ENCODE measurements at regions of chr3 and their contacts with region 1.

Region 1: DNA sequence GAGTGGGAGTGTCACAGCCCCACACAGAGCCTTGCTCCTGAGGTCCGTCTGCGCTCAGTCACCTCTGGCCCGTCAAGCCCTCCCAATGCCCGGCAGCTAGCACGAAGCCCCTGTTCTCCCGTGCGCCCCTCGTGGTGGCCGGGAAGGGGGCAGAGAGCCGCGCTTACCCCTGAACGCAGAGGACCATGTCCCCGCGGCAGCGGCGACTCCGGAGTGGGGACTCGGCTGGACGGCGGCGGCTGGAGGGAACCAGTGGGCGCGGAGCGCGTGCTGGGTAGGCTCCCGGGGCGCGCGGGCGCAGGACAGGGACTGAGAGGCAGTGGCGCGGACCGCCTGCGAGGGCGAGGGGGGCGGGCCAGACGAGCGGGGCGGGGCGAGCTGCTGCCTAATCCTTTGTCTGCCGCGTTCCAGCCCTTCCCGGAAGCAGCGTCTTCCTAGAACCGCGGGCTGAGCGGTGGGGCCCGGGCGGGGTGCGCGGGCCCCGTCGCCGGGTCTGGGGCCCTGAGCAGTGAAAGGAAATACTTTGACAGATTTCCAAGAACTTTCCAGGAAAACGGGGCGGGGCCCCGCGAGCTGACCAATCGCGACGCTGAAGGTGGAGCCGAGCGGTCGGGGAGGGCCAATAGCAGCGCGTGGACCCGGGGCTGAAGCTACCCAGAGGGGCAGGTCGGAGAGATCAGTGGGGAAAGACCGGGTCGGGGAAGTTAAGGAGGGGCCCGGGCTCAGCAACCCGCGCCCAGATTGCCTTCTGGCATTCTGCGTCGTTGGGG is at the start of gene CISH:
- DNase-seq: peak; percentile 78 to 83
- ATAC-seq: peak; percentile 65 to 87
- H3K4me3 ChIP-seq: peak within 1 kb of the TSS; percentile 50
- H3K27ac ChIP-seq: peak within 1 kb of the TSS; percentile 72 to 89
- H3K4me1 ChIP-seq: peaks cover 9% of the 10 kb centered on the region
- CTCF ChIP-seq: peak; percentile 15; the same call in 1 of the 3 replicates
- EP300 ChIP-seq: no peak
- POLR2A ChIP-seq: peak; percentile 43; the same call in 1 of the 2 replicates
- RAD21 ChIP-seq: no peak
- polyA plus RNA-seq, gene CISH: 0.43 and 0.95 TPM in 2 replicates

Region 2: GRCh38 chr3:50525987-50526386 is 85.7 kb before region 1 on chr3:
- CTCF ChIA-PET with region 1: interaction called, 21 read pairs
- POLR2A ChIA-PET with region 1: no interaction called
- DNase-seq: peak; percentile 19 to 40
- ATAC-seq: peak; percentile 63 to 72; a peak in 4 of 6 replicates
- H3K4me3 ChIP-seq: no peak overlapping the region
- H3K27ac ChIP-seq: no peak overlapping the region
- H3K4me1 ChIP-seq: no peaks in the 10 kb centered on the region
- CTCF ChIP-seq: no peak
- EP300 ChIP-seq: no peak
- POLR2A ChIP-seq: no peak
- RAD21 ChIP-seq: no peak

Region 3: DNA sequence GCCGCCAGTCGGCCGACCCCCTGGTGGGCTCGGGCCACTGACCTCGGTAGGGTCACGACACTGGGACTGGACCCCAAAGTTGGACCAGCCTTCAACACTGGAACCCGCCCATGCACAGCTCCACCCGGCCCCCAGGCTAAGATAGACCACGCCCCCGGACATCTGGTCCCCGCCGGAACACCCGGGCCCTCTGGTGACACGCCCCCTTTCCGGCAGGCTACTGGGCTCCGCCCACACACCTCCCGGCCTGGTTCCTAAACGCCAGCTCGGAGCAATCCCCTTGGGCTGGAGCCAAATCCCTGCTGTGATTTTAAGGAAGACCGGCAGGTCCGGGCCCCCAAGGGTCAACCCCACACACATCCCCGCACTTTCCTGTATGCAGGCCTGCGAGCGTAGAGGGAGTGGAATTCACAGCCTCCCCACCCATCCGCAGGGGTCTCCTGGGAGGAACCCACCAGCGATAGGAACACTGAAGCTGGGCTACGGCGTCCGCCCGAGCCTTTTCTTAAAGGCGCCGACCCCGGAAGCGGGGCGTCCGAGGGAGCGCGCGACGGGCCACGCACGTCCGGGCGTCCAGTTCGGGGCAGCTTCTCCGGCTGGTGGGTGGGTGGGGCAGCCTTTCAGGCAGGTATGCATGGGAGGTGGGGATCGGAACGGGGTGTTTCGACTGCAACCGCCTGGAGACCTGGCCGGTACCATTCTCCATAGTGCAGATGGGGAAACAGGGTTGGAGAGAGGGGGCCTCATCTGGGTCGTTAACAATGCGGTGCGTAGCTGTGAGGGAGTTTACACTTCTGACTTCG is 42.5 kb before region 1 on chr3 and contains the start of gene HEMK1:
- CTCF ChIA-PET with region 1: interaction called, 375 read pairs
- POLR2A ChIA-PET with region 1: interaction called, 15 read pairs
- DNase-seq: peak; percentile 91 to 95
- ATAC-seq: peak; percentile 78 to 87
- H3K4me3 ChIP-seq: peak within 1 kb of the TSS; percentile 98
- H3K27ac ChIP-seq: peak within 1 kb of the TSS; percentile 95 to 97
- H3K4me1 ChIP-seq: peaks cover 20% of the 10 kb centered on the region
- CTCF ChIP-seq: no peak
- EP300 ChIP-seq: no peak
- POLR2A ChIP-seq: peak; percentile 23
- RAD21 ChIP-seq: no peak
- polyA plus RNA-seq, gene HEMK1: 4.7 and 5.1 TPM in 2 replicates

Region 4: GRCh38 chr3:50627407-50628051 is 15.9 kb after region 1 on chr3:
- CTCF ChIA-PET with region 1: interaction called, 24 read pairs
- POLR2A ChIA-PET with region 1: no interaction called
- DNase-seq: peak; percentile 40 to 56
- ATAC-seq: peak; percentile 94 to 95
- H3K4me3 ChIP-seq: no peak overlapping the region
- H3K27ac ChIP-seq: peak overlapping the region; percentile 41 to 78; a peak in 5 of 6 replicates
- H3K4me1 ChIP-seq: peaks cover 19% of the 10 kb centered on the region
- CTCF ChIP-seq: peak; percentile 32; the same call in 2 of the 3 replicates
- EP300 ChIP-seq: no peak
- POLR2A ChIP-seq: no peak
- RAD21 ChIP-seq: peak; percentile 56 to 59

Region 5: DNA sequence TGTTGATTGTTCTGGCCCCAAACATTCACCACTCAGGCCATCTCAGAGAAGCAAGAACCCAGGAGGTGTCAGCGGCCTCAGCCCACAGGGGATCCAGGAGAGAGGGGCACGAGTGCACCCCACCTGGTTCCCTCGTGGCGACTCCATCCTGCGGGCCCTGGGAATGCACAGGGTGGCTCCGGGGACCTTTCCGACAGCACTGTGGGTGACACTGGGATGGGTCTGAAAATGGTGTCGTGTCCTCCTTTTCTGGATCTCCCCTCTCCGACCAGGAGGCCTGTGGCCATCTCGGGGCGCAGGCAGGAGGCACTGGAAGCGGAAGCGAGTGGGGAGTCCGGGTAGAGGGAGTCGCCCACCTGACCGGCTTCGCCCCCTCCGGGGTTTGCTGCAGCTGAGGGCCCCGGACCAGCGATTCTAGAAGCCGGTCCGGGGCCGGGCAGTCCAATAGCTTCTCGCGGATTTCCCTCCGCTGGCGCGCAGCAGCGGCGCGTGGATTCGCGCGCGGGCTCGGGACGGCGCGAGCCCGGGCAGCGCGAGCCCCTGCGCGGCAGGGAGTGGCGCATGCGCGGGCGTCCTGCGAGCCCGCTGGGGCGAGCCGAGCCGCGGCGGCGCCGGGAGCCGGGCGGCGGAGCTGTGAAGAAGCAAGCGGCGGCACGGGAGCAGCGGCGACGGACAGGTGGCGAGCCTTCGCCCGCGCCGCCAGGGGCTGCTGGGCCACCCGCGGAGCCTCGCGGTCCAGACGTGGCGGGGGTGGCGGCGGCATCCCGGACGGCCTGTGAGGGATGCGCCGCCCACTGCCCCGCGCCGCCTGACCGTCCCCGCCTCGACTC is 62.9 kb after region 1 on chr3 and contains the start of gene DOCK3:
- CTCF ChIA-PET with region 1: interaction called, 21 read pairs
- POLR2A ChIA-PET with region 1: no interaction called
- DNase-seq: peak in 1 of 2 experiments; percentile 43
- ATAC-seq: peak; percentile 82 to 85
- H3K4me3 ChIP-seq: peak within 1 kb of the TSS; percentile 94
- H3K27ac ChIP-seq: peak within 1 kb of the TSS; percentile 83 to 95
- H3K4me1 ChIP-seq: peaks cover 21% of the 10 kb centered on the region
- CTCF ChIP-seq: no peak
- EP300 ChIP-seq: no peak
- POLR2A ChIP-seq: no peak
- RAD21 ChIP-seq: no peak
- polyA plus RNA-seq, gene DOCK3: 0.40 and 0.60 TPM in 2 replicates

Region 6: DNA sequence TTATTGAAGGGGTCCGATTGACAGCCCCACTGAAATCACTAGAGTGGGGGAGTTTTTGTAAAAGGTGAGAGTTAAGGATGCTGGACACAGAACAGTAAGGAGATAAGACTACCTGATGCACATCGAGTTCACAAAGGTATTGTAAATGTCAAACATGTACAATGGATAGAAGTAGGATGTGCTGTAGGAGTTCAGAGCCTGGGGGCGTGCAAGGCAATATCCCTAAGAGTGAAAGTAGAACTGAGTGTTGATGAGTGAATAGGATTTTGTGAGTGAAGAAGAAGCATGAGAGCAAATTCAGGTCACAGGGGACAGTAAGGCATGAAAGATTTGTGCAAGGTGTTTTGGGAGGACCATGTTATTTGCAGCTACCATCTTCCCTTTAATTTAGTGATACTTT is 84.6 kb after region 1 on chr3:
- CTCF ChIA-PET with region 1: no interaction called
- POLR2A ChIA-PET with region 1: no interaction called
- DNase-seq: no peak
- ATAC-seq: no peak
- H3K4me3 ChIP-seq: no peak overlapping the region
- H3K27ac ChIP-seq: no peak overlapping the region
- H3K4me1 ChIP-seq: no peaks in the 10 kb centered on the region
- CTCF ChIP-seq: no peak
- EP300 ChIP-seq: no peak
- POLR2A ChIP-seq: no peak
- RAD21 ChIP-seq: no peak

Region 7: GRCh38 chr3:50714946-50715345 is 103.3 kb after region 1 on chr3:
- CTCF ChIA-PET with region 1: no interaction called
- POLR2A ChIA-PET with region 1: no interaction called
- DNase-seq: no peak
- ATAC-seq: no peak
- H3K4me3 ChIP-seq: no peak overlapping the region
- H3K27ac ChIP-seq: no peak overlapping the region
- H3K4me1 ChIP-seq: no peaks in the 10 kb centered on the region
- CTCF ChIP-seq: no peak
- EP300 ChIP-seq: no peak
- POLR2A ChIP-seq: no peak
- RAD21 ChIP-seq: no peak

Region 8: GRCh38 chr3:50961386-50961785 is 349.7 kb after region 1 on chr3:
- CTCF ChIA-PET with region 1: no interaction called
- POLR2A ChIA-PET with region 1: no interaction called
- DNase-seq: no peak
- ATAC-seq: no peak
- H3K4me3 ChIP-seq: no peak overlapping the region
- H3K27ac ChIP-seq: no peak overlapping the region
- H3K4me1 ChIP-seq: no peaks in the 10 kb centered on the region
- CTCF ChIP-seq: no peak
- EP300 ChIP-seq: no peak
- POLR2A ChIP-seq: no peak
- RAD21 ChIP-seq: no peak

Region 9: DNA sequence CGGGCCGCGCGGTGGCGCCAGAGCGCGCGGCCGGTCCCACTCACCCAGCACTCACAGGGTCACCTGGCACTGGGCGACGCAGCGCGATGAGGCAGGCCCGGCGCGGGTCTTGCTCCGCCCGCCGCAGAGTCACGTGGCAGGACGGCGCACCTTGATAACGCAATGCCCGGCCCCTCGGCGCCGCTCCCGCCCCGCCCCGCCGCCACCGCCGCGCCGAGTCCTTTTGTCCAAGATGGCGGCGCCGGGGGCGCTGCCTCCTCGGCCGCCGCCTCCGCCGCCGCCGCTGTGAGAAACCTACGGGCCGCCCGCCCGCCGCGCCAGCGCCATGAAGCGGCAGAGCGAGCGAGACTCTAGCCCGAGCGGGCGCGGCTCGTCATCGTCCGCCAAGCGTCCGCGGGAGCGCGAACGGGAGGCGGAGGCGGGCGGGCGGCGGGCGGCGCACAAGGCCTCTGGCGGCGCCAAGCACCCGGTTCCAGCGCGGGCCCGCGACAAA is 779.5 kb after region 1 on chr3 and contains the start of gene RBM15B:
- CTCF ChIA-PET with region 1: interaction called, 106 read pairs
- POLR2A ChIA-PET with region 1: no interaction called
- DNase-seq: peak; percentile 82 to 95
- ATAC-seq: peak; percentile 88 to 93
- H3K4me3 ChIP-seq: peak within 1 kb of the TSS; percentile 92
- H3K27ac ChIP-seq: peak within 1 kb of the TSS; percentile 94 to 99
- H3K4me1 ChIP-seq: peaks cover 38% of the 10 kb centered on the region
- CTCF ChIP-seq: peak; percentile 75
- EP300 ChIP-seq: no peak
- POLR2A ChIP-seq: peak; percentile 61; the same call in 1 of the 2 replicates
- RAD21 ChIP-seq: peak; percentile 34 to 41; a peak in 2 of 5 replicates
- polyA plus RNA-seq, gene RBM15B: 7.9 and 10.9 TPM in 2 replicates

Measured in A549 (cell line).